Heart right ventricle (tissue), 16 donors: ENCODE measurements at regions of chr9 and their contacts with region 1.

Region 1: GRCh38 chr9:101915482-101915881 is 177.0 kb upstream of the GRIN3A start:
- DNase-seq: no peak
- ATAC-seq: no peak
- H3K4me3 ChIP-seq: no peak overlapping the region
- H3K27ac ChIP-seq: no peak overlapping the region
- H3K4me1 ChIP-seq: no peaks in the 10 kb centered on the region
- H3K27me3 ChIP-seq: no peaks in the 10 kb centered on the region
- CTCF ChIP-seq: no peak

Region 2: DNA sequence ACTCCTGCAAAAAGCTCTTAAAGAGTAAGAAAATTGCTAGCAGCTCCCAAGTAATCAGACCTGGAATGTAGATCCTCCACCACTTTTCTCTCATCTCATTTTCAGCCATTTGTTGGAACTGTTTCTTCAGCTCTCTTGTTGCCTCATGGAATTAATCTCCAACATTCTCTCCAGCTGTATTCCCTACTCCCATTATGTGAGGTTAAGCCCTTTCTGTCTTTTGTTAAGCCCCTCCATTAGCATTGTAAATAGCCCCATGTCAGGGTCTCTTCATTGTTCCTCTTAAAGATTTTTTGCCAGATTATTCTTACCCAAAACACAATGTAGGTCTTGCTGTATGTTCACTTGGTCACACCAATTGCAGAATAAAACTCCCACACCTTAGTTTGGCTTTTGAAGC is 767.1 kb before region 1 on chr9:
- intact Hi-C with region 1: no loop called
- DNase-seq: no peak
- ATAC-seq: no peak
- H3K4me3 ChIP-seq: no peak overlapping the region
- H3K27ac ChIP-seq: no peak overlapping the region
- H3K4me1 ChIP-seq: no peaks in the 10 kb centered on the region
- H3K27me3 ChIP-seq: no peaks in the 10 kb centered on the region
- CTCF ChIP-seq: no peak

Region 3: GRCh38 chr9:101858026-101858425 is 57.5 kb before region 1 on chr9:
- intact Hi-C with region 1: loop called in 1 of 10 experiments (anchors 10 kb)
- DNase-seq: no peak
- ATAC-seq: no peak
- H3K4me3 ChIP-seq: no peak overlapping the region
- H3K27ac ChIP-seq: no peak overlapping the region
- H3K4me1 ChIP-seq: no peaks in the 10 kb centered on the region
- H3K27me3 ChIP-seq: no peaks in the 10 kb centered on the region
- CTCF ChIP-seq: no peak

Region 4: DNA sequence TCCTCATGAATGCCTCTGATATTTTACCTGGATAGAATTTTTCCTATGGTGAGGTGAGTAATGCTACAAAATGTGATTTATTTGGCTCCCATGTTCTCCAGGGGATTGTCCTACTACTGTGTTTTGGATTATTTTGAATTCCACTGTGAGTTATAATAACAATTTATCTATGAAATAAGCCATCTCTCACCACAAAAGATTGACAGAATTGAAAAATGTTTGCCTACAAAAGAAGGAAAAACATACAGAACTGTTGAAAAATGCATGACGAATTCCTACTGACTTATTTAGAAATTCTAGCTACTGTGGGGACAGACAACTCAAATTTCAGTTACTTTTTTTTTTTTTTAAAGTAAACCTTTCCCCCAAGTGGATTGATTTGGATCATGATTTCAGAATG is 286.6 kb after region 1 on chr9:
- intact Hi-C with region 1: no loop called
- DNase-seq: no peak
- ATAC-seq: no peak
- H3K4me3 ChIP-seq: no peak overlapping the region
- H3K27ac ChIP-seq: no peak overlapping the region
- H3K4me1 ChIP-seq: no peaks in the 10 kb centered on the region
- H3K27me3 ChIP-seq: no peaks in the 10 kb centered on the region
- CTCF ChIP-seq: no peak